ENCODE measurements at regions of chr11 and their contacts with region 1.

Region 1: DNA sequence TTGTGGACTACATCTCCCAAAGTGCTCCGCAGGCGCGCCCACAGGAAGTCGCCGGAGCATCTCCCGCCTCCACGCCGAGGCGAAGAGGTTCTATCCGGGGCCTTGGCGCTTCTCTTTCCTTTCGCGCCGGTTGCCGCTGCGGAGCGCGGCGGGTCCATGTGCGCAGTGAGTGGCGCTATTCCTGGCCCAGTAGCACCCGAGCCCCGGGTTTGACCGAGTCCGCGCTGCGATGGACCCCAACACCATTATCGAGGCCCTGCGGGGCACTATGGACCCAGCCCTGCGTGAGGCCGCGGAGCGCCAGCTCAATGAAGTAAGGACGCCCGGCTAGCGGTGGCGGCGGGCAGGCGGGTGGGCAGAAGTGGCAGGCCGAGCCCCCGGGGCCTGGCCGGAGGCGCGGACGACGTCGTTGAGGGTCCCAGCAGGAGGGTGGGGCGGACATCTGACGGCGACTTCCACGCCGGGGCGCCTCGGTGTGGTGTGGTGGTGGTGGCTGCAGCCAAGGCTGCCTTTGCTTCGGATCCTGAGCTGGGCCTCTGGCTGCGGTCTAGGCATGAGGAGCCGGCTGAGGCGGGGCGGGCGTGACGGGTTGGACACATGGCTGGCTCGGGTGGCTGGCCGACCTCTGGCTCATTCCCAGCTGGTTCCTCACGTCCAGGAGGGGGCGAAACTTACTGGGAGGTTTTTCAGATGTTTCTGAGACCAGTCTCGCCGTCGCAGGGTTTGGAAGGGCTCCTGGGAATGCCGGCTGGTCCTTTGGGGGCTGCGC is at the start of gene IPO7:
- DNase-seq: peak; percentile 92
- H3K4me3 Mint-ChIP-seq: peak within 1 kb of the TSS; percentile 90
- H3K27ac Mint-ChIP-seq: peak within 1 kb of the TSS; percentile 94
- H3K4me1 Mint-ChIP-seq: peaks cover 12% of the 10 kb centered on the region
- H3K27me3 Mint-ChIP-seq: no peaks in the 10 kb centered on the region
- CTCF ChIP-seq: peak; percentile 32
- total RNA-seq, gene IPO7: 116 and 145 TPM in 2 replicates

Region 2: GRCh38 chr11:9314291-9315036 is 70.3 kb before region 1 on chr11 and contains the start of gene TMEM41B:
- CTCF ChIA-PET with region 1: interaction called, 9 read pairs
- POLR2A ChIA-PET with region 1: interaction called, 109 read pairs
- intact Hi-C with region 1: loop called (anchors 1 kb)
- DNase-seq: peak; percentile 99
- H3K4me3 Mint-ChIP-seq: peak within 1 kb of the TSS; percentile 99
- H3K27ac Mint-ChIP-seq: peak within 1 kb of the TSS; percentile 98
- H3K4me1 Mint-ChIP-seq: peaks cover 14% of the 10 kb centered on the region
- H3K27me3 Mint-ChIP-seq: no peaks in the 10 kb centered on the region
- CTCF ChIP-seq: no peak
- total RNA-seq, gene TMEM41B: 50.3 and 72.8 TPM in 2 replicates

Region 3: DNA sequence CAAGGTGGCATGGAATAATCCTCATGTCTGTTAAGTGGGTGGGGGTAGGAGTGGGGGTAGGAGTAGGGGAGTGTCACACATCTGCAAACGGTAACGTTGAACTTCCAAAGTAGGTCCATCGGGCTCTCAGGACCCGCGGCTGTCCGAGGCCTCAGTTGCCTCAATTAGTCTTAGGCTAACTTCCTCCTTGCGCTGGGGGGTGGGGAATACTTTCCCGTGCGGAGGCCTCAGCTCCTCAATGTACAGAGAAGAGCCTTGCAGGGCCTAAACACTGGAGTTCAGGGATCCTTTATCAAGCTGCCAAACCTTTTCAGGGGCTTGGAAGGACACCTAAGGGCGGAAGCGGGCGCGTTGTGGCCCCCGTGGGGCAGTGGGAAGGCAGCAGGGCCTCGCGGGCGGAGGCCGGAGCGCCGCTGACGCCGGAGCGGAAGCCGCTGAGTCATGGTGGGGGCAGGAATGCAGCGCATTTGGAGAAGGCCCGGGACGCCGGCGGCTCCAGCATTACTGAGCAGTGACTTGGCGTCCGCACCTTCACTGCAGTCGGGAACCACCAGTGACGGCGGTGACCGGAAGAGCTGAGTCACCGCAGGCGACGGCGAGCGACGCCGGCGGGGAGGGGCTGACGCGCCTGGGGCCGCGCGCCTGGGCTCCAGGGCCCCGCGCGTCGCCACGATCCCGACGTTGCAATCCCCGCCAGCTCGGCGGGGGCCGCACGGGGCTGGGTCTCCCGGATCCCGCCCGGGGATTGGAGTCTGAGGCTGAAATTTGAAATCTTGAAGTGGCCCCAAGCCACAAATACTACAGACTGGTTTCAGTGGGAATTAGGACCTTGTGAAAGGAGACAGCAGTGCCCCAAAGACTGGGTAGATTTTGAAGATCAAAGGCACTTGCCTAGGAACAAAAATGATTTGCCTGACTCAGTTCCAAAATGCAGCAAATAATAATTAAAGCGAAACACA is 20.5 kb before region 1 on chr11:
- CTCF ChIA-PET with region 1: interaction called, 9 read pairs
- POLR2A ChIA-PET with region 1: interaction called, 59 read pairs
- intact Hi-C with region 1: loop called (anchors 1 kb)
- DNase-seq: peak; percentile 95
- H3K4me3 Mint-ChIP-seq: peak overlapping the region; percentile 74
- H3K27ac Mint-ChIP-seq: peak overlapping the region; percentile 98
- H3K4me1 Mint-ChIP-seq: peaks cover 12% of the 10 kb centered on the region
- H3K27me3 Mint-ChIP-seq: no peaks in the 10 kb centered on the region
- CTCF ChIP-seq: no peak

Region 4: DNA sequence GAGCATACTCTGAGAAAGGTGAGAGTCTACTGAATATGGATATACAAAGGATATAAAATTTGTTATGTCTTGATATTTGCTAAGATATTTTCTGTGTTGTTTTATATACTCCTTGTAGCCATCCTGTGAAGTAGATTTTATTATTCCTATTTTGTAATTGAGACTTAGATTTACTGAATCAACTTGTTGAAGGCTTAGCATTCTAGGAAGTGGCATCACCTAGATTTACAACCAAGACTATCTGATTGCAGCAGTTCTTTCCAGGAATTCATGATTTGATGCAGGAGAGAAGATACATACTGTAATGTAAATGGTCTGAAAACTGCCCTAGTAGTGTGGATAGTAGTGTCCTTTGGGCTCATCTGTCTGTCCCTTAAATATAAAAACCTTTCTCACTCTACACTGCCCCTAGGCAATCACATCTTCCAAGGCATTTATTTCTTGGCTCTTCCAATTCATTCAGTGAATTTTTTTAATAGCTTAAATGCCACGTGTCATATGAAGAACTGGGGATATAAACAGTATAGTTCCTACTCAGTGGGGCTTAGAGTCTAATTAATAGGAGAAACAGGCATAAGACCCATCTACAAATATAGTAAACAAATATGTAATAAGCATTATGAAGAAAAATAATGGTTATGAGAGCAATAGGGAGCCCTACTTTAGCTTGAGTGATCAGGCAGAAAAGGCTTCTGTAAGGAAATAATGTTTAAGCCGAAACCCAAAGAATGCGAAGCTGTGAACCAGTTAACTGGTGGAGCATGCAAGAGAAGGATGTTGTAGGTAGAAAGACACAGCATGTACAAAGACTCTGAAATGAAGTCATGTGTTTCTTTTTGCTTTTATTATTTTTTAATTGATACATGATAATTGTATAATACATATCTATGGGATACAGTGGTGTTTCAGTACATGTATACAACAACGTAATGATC is 13.3 kb after region 1 on chr11:
- CTCF ChIA-PET with region 1: interaction called, 8 read pairs
- POLR2A ChIA-PET with region 1: interaction called, 19 read pairs
- intact Hi-C with region 1: no loop called
- DNase-seq: no peak
- H3K4me3 Mint-ChIP-seq: no peak overlapping the region
- H3K27ac Mint-ChIP-seq: no peak overlapping the region
- H3K4me1 Mint-ChIP-seq: peaks cover 22% of the 10 kb centered on the region
- H3K27me3 Mint-ChIP-seq: no peaks in the 10 kb centered on the region
- CTCF ChIP-seq: no peak

Region 5: DNA sequence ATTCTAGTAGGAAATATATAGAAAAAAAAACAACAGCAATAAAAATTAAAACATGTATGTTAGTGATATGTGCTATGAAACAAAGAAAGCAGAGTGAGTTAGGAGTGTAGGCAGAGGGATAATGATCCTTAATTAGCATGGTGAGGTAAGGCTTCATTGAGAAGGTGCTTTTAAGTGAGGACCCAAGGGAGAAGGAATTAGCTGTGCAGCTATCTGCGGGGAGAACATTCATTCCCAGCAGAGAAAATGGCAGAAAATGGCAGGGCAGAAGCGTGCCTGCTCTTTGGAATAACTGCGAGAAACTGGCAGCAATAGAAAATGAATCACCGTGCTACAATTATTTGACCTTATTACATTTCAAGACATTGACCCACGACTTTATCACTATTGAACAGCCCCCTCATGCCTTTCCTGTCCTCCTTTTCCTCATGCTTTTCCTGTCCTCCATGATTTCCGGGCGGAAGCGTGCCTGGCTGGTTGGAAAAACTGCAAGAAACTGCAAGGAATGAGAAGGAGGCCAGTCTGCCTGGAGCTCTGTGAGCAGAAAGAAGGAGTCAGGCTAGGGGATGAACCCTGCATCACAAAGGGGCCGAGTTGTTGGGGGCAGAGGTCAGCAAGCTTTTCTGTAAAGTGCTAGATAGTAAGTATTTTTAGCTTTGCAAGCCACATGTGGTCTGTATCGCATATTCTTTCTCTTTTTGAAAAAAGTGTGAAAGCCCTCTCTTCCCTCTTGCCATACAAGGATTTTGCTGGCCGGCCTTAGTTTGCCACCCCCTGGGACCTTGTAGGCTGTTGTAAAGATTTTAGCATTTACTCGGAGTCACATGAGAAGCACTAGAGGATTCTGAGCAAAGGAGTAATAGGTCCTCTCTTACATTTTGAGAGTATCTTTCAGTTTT is 242.0 kb after region 1 on chr11:
- CTCF ChIA-PET with region 1: no interaction called
- POLR2A ChIA-PET with region 1: no interaction called
- intact Hi-C with region 1: no loop called
- DNase-seq: no peak
- H3K4me3 Mint-ChIP-seq: no peak overlapping the region
- H3K27ac Mint-ChIP-seq: no peak overlapping the region
- H3K4me1 Mint-ChIP-seq: peaks cover 7% of the 10 kb centered on the region
- H3K27me3 Mint-ChIP-seq: no peaks in the 10 kb centered on the region
- CTCF ChIP-seq: no peak

Region 6: DNA sequence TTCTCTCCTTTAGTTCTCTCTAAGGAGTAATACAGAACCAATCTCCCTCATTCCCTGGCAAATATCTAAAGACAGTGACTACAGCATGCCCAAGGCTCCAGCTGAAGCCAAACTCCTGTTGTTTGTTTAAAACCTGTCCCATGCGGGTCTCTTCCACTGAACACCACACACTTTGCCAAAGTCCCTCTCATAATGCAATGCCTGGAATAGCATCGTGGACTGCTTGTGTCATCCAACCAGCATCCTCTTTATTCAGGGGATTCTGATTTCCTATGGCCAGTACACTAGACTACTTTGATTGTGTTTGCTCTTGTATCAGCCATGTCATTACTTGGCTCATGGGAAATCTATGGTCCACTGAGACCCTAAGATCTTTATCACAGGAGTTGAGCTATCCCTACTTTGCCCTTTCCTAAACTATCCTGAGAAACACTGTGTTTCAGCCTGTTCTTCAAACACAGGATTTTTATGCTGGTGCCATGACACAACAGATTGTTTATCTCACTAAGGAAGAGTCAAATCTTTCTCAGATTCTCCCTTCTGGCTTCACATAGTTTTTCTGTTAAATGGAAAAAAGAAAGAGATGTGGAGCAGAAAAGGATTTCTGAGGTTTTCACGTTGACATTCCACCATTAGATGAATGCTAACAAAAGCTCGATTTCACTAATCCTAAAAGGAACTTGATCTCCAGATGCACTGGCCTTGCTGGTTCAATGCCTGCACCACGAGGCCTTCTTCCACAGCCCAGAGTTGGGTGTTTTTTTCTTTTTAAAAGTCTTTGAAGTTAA is 1324.8 kb after region 1 on chr11:
- CTCF ChIA-PET with region 1: no interaction called
- POLR2A ChIA-PET with region 1: no interaction called
- intact Hi-C with region 1: no loop called
- DNase-seq: no peak
- H3K4me3 Mint-ChIP-seq: no peak overlapping the region
- H3K27ac Mint-ChIP-seq: no peak overlapping the region
- H3K4me1 Mint-ChIP-seq: no peaks in the 10 kb centered on the region
- H3K27me3 Mint-ChIP-seq: no peaks in the 10 kb centered on the region
- CTCF ChIP-seq: no peak

Measured in MCF 10A (cell line).